Activated CD4-positive, alpha-beta memory T cell treated with anti-CD3 and anti-CD28 coated beads for 36 hours (primary cell): ENCODE measurements at regions of chr11 and their contacts with region 1.

Region 1: DNA sequence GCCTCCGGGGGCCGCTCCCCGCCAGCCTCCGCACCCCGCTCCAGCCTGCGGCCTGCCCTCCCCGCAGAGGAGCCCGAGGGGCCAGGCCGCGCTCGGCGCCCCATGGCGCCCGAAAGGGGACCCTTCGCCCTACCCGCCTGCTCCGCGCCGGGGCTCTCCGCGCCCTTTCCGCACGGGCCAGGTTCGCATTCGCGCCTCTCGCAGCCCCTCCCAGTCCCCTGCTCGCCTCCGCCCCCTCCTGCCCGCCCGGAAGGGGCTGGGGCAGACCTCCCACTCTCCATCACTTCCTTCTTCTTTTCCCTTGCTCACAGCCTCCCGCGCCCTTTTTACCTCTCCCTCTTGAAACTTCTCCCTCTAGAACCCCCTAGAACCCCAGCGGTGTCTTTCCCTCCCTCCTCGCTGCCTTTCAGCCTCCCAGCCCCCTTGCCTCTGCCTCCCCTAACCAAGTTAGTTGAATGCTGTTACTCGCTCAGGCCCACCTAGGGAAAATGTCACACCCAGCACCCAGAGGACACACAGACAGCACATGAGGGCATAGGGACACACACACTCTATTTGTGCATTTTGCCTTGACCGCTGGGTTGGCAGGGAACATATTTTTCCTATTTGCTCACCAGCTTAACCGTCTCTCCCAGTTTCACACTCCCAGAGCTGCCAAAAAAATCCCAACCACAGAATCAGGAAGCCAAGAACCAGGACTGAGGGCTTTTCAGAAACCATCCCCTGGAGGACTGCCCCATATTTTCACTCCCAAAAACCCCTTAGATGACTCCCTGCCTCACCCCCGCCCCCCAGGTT is at the start of gene SLC43A3:
- DNase-seq: peak; percentile 87
- H3K4me3 Mint-ChIP-seq: peak within 1 kb of the TSS; percentile 96
- H3K27ac Mint-ChIP-seq: peak within 1 kb of the TSS; percentile 92
- H3K4me1 Mint-ChIP-seq: peaks cover 41% of the 10 kb centered on the region
- H3K27me3 Mint-ChIP-seq: no peaks in the 10 kb centered on the region
- total RNA-seq, gene SLC43A3: 170 to 186 TPM

Region 2: DNA sequence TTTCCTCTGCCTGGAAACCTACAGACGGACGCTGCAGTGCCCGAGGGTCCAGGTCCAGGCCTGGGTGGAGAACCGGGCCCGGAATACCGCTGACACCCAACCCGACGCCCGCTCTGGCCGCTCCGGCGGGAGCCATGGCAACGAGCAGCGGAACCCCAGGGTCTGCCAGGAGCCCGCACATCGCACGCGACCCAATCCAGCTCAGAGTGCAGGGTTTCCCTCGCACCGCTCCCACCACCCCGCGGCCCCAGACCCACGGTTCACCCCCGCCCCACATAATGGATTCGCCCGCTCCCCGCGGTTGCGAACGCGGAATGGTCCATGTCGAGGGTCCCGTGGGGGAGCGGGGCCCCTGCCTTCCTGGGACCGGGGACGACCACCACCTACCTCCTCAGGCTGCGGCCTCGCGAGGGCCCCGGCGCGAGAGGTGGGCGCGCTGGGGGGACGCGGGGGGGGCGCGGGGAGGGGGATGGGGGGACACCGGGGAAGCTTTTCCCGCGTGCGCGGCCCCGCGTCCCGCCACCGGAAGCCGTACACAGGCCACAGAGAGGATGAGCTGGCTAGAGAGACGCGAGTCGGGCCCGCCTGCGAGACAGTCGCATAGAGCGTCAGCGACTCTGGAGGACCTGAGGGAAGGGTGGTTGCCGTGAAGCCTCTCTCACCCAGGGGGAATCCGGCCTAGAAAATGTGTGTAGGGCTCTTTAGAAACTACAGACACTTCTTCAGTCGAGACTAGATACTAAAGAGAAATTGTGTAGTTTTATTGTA is 91.6 kb before region 1 on chr11 and contains the start of gene SSRP1:
- CTCF ChIA-PET with region 1: interaction called, 4 read pairs
- POLR2A ChIA-PET with region 1: interaction called, 6 read pairs
- intact Hi-C with region 1: loop called (anchors 1 kb)
- DNase-seq: peak; percentile 92
- H3K4me3 Mint-ChIP-seq: peak within 1 kb of the TSS; percentile 91
- H3K27ac Mint-ChIP-seq: peak within 1 kb of the TSS; percentile 98
- H3K4me1 Mint-ChIP-seq: peaks cover 47% of the 10 kb centered on the region
- H3K27me3 Mint-ChIP-seq: no peaks in the 10 kb centered on the region
- total RNA-seq, gene SSRP1: 256 to 262 TPM

Region 3: DNA sequence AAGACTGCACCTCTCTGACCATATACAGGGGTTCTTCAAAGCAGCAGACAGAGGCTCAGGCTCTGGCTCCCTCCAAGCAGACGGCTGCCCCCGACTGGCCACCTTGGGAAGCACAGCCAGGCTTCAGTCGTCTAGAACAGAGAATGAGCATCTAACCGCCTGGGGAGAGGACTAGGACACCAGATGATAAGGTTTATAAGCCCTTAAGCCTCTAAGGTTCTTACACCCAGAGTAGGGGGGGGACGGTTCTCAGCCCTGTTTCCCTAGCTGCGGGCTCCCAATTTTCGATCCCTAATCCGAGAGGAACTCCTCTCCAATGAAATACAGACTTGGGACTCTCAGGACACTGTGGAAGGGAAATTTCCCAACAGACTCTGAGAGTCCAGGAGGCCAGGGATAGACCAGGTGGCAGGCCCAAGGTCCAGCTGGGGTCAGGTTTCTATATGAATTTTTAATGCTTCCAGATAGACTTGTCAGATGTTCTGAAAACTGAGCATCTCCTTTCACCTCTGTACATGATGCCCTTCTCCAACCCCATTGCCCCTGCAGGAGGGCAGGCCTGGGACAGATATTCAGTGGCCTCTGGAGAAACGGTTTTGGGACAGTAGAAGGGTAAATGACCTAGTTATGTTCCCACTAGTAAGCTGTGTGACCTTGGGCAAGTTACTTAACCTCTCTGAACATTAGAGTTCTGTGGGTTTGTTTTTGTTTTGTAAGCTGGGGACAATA is 53.4 kb after region 1 on chr11:
- CTCF ChIA-PET with region 1: interaction called, 3 read pairs
- POLR2A ChIA-PET with region 1: interaction called, 3 read pairs
- intact Hi-C with region 1: loop called (anchors 2 kb)
- DNase-seq: peak; percentile 87
- H3K4me3 Mint-ChIP-seq: no peak overlapping the region
- H3K27ac Mint-ChIP-seq: no peak overlapping the region
- H3K4me1 Mint-ChIP-seq: peaks cover 13% of the 10 kb centered on the region
- H3K27me3 Mint-ChIP-seq: peaks cover 17% of the 10 kb centered on the region

Region 4: DNA sequence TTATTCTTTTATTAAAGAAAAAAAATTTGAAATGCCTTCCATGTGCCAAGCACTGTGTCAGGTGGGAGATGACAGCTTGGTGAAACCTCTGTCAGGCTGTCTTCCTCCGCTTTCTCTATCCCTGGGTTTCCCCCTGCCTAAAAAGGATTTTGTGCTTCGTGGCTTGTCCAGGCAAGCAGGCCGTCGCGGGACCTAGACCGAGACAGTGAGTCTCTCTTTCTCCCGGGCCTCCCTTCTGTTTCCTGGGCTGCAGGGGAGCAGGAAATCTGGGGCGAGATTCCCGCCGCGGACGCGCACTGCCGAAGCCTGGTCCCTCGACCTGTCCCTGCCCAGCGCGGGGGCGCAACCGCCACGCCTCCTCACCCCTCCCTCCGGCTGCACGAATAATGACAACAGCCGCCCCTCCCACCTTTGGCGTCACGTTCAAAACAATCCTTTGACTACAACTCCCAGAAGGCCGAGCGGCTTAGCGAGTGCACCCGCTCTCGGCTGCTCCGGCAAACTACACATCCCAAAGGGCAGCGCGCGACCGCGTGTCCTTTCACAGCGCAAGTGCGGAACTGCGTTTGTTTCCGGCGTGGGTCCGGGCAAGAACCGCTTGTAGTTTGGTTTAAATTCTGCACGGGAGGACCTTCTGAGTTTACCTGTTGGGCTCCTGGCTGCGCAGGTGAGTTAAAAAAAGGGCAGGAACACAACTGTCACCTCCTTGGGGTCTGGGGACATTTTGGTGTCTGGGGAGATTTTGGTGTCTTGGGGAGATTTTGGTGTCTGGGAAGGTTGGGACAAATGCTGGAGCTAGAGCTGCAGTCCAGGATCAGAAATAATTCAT is 230.3 kb after region 1 on chr11 and contains the start of gene CLP1:
- CTCF ChIA-PET with region 1: no interaction called
- POLR2A ChIA-PET with region 1: no interaction called
- intact Hi-C with region 1: loop called (anchors 2 kb)
- DNase-seq: peak; percentile 100
- H3K4me3 Mint-ChIP-seq: peak within 1 kb of the TSS; percentile 100
- H3K27ac Mint-ChIP-seq: peak within 1 kb of the TSS; percentile 94
- H3K4me1 Mint-ChIP-seq: peaks cover 33% of the 10 kb centered on the region
- H3K27me3 Mint-ChIP-seq: no peaks in the 10 kb centered on the region
- total RNA-seq, gene CLP1: 13.9 to 15.2 TPM

Region 5: DNA sequence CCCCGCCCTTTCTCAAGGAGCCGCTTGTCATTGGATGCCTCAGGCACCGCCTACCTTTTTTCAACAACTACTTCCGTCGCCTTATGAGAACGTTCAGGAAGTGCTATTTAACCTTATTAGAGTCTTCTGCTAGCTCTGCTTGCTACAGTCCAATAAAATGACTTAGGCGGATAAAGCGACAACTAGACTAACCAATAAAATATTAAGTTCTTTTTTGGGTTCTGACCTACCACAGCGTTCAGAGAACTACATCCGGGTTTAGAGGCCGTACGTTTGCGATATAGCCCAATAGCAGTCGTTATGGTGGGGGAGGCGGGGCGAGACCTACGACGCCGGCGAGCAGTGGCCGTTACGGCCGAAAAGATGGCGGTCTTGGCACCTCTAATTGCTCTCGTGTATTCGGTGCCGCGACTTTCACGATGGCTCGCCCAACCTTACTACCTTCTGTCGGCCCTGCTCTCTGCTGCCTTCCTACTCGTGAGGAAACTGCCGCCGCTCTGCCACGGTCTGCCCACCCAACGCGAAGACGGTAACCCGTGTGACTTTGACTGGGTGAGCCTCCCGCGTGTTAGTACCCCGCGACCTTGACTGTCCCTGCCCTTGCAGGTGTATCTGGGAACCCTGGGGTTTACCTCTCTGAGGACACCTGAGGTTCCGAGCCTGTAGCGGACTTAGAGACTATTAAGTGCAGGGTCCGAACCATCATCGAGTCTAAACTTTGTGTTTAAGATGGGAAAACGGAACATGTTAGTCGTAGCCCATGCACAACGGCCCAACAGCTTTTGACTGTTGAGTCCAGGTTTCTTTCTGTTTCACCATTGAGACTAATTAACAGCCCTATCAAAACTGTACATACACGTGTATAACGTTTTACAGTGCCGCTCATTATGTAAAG is 285.4 kb after region 1 on chr11 and contains the start of gene TMX2:
- CTCF ChIA-PET with region 1: no interaction called
- POLR2A ChIA-PET with region 1: no interaction called
- intact Hi-C with region 1: loop called (anchors 5 kb)
- DNase-seq: peak; percentile 94
- H3K4me3 Mint-ChIP-seq: peak within 1 kb of the TSS; percentile 94
- H3K27ac Mint-ChIP-seq: peak within 1 kb of the TSS; percentile 89
- H3K4me1 Mint-ChIP-seq: peaks cover 53% of the 10 kb centered on the region
- H3K27me3 Mint-ChIP-seq: no peaks in the 10 kb centered on the region
- total RNA-seq, gene TMX2: 54.9 to 57.2 TPM

Region 6: DNA sequence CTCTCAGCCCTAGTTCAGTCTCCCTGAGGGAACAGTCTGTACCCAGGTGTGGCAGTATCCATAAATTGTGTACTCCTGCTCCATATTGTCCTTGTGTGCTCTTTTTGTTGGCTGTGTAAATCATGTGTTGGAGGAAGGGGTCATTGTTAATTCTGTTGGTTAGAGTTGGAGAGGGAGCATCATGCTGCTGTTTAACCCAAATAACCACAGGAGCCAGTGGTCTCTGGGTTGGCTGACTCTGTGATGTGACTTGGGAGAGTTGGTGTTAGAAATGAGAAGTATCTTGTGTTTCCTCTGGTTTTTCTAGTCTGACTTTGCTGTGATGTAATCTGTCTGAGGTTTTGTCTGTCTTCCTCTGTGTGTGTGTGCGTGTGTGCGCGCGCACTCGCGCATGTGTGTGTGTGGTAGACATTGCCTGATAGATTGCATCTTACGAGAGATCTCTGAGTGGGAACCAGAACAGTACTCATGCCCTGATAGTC is 365.0 kb after region 1 on chr11:
- CTCF ChIA-PET with region 1: no interaction called
- POLR2A ChIA-PET with region 1: no interaction called
- intact Hi-C with region 1: loop called (anchors 2 kb)
- DNase-seq: peak; percentile 90
- H3K4me3 Mint-ChIP-seq: peak overlapping the region; percentile 55
- H3K27ac Mint-ChIP-seq: peak overlapping the region; percentile 86
- H3K4me1 Mint-ChIP-seq: peaks cover 34% of the 10 kb centered on the region
- H3K27me3 Mint-ChIP-seq: peaks cover 1% of the 10 kb centered on the region